ENCODE measurements at regions of chr11 and their contacts with region 1.

Region 1: DNA sequence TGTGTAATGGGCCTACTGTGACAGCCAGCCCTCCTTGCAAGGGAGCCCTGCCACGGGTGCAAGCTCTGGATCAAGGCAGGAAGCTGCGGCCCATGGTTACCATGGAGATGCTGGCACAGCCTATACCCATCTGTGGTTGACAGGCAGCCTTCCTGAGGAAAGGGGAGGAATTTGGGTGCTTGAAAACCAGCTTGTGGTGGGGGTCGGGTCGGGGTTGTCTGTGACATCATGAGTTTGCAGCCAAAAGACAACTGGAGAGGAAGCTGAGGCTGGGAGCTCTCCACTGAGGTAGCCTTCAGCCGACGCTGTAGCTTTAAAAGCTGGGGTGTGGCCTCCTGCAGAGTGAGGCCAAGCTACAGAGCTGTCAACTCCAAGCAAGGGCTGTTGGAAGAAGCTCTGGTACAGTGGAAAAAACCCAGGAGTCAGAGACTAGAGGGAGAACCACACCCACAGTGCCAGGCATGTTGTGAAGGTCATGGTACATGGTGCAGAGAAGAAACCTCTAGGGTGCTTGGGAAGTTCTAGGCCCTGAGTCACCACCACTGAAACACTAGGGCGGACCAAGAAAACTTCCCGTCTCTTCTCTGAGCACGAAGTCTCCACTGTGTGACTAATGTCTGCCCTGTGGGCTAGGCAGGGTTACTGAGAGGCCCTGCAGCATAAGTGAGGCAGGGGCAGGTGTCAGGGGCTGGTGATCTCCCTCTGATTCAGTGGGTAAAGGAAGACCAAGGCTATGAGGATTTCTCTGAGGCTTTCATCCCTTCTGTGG is 10.8 kb upstream of the LDHA start:
- DNase-seq: peak; percentile 14 to 80 (median 60)
- ATAC-seq: peak; percentile 86 to 94 (median 89)
- H3K4me3 ChIP-seq: peak overlapping the region; percentile 16 to 33
- H3K4me3 Mint-ChIP-seq: peak overlapping the region in 2 of 3 donors; percentile 64 to 84
- H3K27ac ChIP-seq: peak overlapping the region; percentile 90
- H3K27ac Mint-ChIP-seq: peak overlapping the region; percentile 97 to 100
- H3K4me1 ChIP-seq: peaks cover 19 to 51% of the 10 kb centered on the region in 2 experiments
- H3K4me1 Mint-ChIP-seq: peaks cover 25 to 52% (median 45%) of the 10 kb centered on the region in 3 donors
- H3K27me3 ChIP-seq: no peaks in the 10 kb centered on the region
- H3K27me3 Mint-ChIP-seq: no peaks in the 10 kb centered on the region

Region 2: DNA sequence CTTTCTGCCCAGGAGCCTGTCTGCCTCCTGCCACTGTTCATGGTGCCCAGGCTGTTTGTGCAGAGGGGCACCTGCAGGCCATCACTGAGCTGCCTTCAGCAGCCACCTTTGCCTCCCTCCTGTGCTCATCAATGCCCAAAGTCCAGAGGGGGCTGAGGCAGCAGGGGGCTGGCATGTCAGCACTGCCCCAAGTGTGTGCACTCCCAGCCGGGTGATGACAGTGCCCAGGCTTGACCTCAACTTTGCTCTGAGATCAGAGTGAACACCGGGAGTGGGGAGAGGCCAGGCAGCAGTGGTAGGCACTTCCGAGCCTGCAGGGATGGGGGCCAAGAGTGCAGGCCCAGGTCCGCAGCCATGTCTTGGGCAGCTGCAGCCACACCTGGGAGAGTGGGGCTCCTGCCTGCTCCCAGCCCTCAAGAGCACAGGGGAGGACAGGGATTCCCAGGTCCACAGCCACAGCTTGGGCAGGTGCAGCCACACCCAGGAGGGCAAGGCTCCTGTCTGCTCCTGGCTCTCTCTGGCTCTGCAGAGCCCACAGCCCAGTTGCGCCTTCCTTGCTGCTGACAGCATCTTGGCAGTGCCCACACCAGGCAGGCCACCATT is 162.2 kb before region 1 on chr11:
- CTCF ChIA-PET with region 1: no interaction called
- POLR2A ChIA-PET with region 1: no interaction called
- DNase-seq: no peak
- ATAC-seq: no peak
- H3K4me3 ChIP-seq: no peak overlapping the region
- H3K4me3 Mint-ChIP-seq: no peak overlapping the region
- H3K27ac ChIP-seq: no peak overlapping the region
- H3K27ac Mint-ChIP-seq: no peak overlapping the region
- H3K4me1 ChIP-seq: no peaks in the 10 kb centered on the region
- H3K4me1 Mint-ChIP-seq: no peaks in the 10 kb centered on the region
- H3K27me3 ChIP-seq: peaks cover 0 to 3% of the 10 kb centered on the region in 2 experiments
- H3K27me3 Mint-ChIP-seq: peaks cover 11% of the 10 kb centered on the region in 2 donors

Region 3: DNA sequence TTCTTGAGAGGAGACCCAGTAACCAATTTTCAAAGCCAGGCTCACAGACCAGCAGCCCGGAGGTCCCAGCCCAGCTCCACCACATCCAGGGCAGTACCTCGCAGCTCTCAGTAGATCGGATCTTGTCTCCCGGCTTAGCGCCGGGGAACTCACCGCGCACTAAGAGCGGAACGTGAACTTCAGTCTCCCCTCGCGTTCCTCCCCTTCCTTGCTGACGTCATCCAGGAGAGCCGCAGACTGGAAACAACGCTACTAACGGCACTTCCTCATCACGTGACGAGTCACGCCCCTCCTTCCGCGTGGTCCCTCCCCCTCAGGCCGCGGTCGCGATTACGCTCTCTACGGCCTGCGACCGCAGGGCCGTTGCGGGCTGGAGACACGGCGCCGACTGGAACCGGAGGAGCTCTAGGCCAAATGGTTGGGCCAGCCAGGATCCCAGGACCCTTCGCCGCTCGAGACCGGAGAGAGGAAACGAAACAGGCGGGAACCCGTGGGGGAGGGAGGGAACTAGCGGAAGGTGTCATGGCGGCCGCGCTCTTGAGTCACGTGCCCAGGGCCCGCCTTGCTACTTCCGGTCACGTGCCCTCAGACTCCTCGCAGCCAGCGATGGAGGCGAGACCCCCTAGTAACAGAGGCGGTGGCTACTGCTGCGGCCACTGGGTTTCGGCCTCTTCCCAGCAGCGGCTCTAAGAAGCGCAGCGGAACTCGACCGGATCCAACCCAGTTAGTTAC is 61.4 kb before region 1 on chr11 and contains the starts of genes GTF2H1 and HPS5:
- CTCF ChIA-PET with region 1: interaction called in 1 of 2 experiments, 10 read pairs
- POLR2A ChIA-PET with region 1: no interaction called
- DNase-seq: peak; percentile 92 to 99 (median 96)
- ATAC-seq: peak; percentile 89 to 91 (median 90)
- H3K4me3 ChIP-seq: peak within 1 kb of the TSS; percentile 77 to 93
- H3K4me3 Mint-ChIP-seq: peak within 1 kb of the TSS; percentile 97 to 99 (median 98)
- H3K27ac ChIP-seq: peak within 1 kb of the TSS; percentile 98
- H3K27ac Mint-ChIP-seq: peak within 1 kb of the TSS; percentile 100
- H3K4me1 ChIP-seq: peaks cover 21 to 32% of the 10 kb centered on the region in 2 experiments
- H3K4me1 Mint-ChIP-seq: peaks cover 77 to 82% (median 79%) of the 10 kb centered on the region in 3 donors
- H3K27me3 ChIP-seq: no peaks in the 10 kb centered on the region
- H3K27me3 Mint-ChIP-seq: no peaks in the 10 kb centered on the region
- total RNA-seq, gene GTF2H1: 25.9 to 44.8 (median 37.5) TPM
- total RNA-seq, gene HPS5: 12.9 to 17.9 (median 14.3) TPM

Region 4: GRCh38 chr11:18408558-18409242 is 25.1 kb after region 1 on chr11:
- CTCF ChIA-PET with region 1: no interaction called
- POLR2A ChIA-PET with region 1: interaction called in 1 of 2 experiments, 16 read pairs
- DNase-seq: no peak
- ATAC-seq: no peak
- H3K4me3 ChIP-seq: no peak overlapping the region
- H3K4me3 Mint-ChIP-seq: no peak overlapping the region
- H3K27ac ChIP-seq: no peak overlapping the region
- H3K27ac Mint-ChIP-seq: no peak overlapping the region
- H3K4me1 ChIP-seq: peaks cover 0 to 4% of the 10 kb centered on the region in 2 experiments
- H3K4me1 Mint-ChIP-seq: peaks cover 7 to 15% (median 7%) of the 10 kb centered on the region in 3 donors
- H3K27me3 ChIP-seq: no peaks in the 10 kb centered on the region
- H3K27me3 Mint-ChIP-seq: no peaks in the 10 kb centered on the region